GM12878 (cell line): ENCODE measurements at regions of chr2 and their contacts with region 1.

Region 1: DNA sequence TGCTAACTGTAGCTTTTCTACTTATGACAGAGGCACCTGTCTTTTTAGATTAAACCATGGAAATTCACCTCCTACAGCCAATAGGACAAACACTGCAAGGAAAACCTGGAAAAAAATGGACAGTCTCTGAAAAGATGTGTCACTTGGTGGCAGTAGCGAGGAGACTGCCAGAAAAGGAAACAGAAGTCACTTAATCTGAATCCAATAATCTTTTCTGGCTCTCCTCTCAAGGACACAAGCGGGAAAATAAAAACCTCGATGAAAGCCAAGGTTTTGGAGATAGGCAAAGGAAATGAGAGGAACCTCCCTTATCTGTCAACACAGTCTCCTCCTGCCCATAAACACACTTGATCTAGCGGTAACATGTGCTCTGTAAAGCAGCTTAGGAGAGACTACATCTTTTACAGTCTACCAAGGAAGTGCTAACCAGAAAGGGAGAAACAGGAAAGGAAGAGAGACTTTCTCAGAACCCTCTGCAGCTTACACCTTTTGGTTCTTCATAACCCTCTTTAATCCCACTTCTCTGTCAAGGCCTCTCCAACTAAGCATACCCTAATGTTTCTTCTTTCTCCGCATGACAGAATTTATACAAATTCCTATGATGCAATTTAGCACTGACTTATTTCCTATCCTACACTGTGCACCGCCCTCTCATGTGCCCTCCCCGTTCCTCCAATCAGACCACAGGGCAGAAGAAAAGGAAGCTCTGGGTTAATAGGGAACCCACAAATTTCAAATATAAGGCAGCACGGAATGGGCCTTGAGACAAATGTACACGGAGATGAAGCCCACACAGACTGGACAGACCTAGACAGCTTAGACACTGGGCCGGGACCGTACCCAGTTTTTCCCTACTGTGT is 52.8 kb downstream of the CLASP1 start:
- DNase-seq: peak; percentile 60
- ATAC-seq: peak; percentile 82
- H3K4me3 ChIP-seq: peak overlapping the region; percentile 62
- H3K27ac ChIP-seq: peak overlapping the region; percentile 84
- H3K4me1 ChIP-seq: peaks cover 38% of the 10 kb centered on the region
- H3K27me3 ChIP-seq: no peaks in the 10 kb centered on the region
- CTCF ChIP-seq: peak; percentile 28 to 46 (median 36); a peak in 4 of 6 replicates
- EP300 ChIP-seq: no peak; a peak in 1 of 4 replicates
- POLR2A ChIP-seq: peak; percentile 62
- RAD21 ChIP-seq: peak; percentile 46

Region 2: DNA sequence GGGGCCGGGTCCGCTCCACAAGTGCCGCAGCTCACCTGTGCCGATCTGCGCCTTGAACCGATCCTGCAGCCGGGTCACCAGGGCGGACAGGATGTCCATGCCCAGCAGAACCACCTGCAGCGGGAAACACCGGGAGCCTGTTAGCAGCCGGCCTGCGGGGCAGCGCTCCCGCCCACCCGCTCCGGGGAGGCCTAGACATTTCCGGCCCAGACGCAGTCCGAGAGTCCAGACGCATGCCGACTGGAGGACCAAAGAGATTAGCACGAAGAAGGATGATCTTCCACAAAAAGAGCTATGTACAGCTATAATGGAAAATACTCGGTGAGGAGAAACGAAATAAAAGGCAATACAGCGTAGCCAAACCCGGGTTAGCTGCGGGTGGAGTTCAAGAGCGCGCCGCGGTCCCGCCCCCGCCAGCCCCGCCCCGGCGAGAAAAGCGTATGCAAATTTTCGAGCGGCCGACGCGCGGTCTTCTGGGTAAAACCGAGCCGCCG is 66.2 kb before region 1 on chr2:
- CTCF ChIA-PET with region 1: interaction called, 44 read pairs
- POLR2A ChIA-PET with region 1: interaction called, 47 read pairs
- RAD21 ChIA-PET with region 1: interaction called, 39 read pairs
- SMC1A ChIA-PET with region 1: interaction called, 30 read pairs
- in situ Hi-C with region 1: no loop called
- intact Hi-C with region 1: loop called (anchors 2 kb)
- DNase-seq: peak; percentile 52
- ATAC-seq: peak; percentile 82
- H3K4me3 ChIP-seq: peak overlapping the region; percentile 79
- H3K27ac ChIP-seq: peak overlapping the region; percentile 98
- H3K4me1 ChIP-seq: peaks cover 18% of the 10 kb centered on the region
- H3K27me3 ChIP-seq: no peaks in the 10 kb centered on the region
- CTCF ChIP-seq: no peak
- EP300 ChIP-seq: no peak
- POLR2A ChIP-seq: no peak
- RAD21 ChIP-seq: no peak

Region 3: GRCh38 chr2:121575800-121576199 is 20.7 kb before region 1 on chr2:
- CTCF ChIA-PET with region 1: no interaction called
- POLR2A ChIA-PET with region 1: interaction called, 5 read pairs
- RAD21 ChIA-PET with region 1: no interaction called
- SMC1A ChIA-PET with region 1: interaction called, 12 read pairs
- in situ Hi-C with region 1: no loop called
- intact Hi-C with region 1: no loop called
- DNase-seq: no peak
- ATAC-seq: no peak
- H3K4me3 ChIP-seq: no peak overlapping the region
- H3K27ac ChIP-seq: no peak overlapping the region
- H3K4me1 ChIP-seq: no peaks in the 10 kb centered on the region
- H3K27me3 ChIP-seq: no peaks in the 10 kb centered on the region
- CTCF ChIP-seq: no peak
- EP300 ChIP-seq: no peak
- POLR2A ChIP-seq: no peak
- RAD21 ChIP-seq: no peak

Region 4: GRCh38 chr2:121640385-121641316 is 44.2 kb after region 1 on chr2:
- CTCF ChIA-PET with region 1: interaction called, 5 read pairs
- POLR2A ChIA-PET with region 1: interaction called, 8 read pairs
- RAD21 ChIA-PET with region 1: interaction called, 3 read pairs
- SMC1A ChIA-PET with region 1: interaction called, 14 read pairs
- in situ Hi-C with region 1: no loop called
- intact Hi-C with region 1: no loop called
- DNase-seq: no peak
- ATAC-seq: peak; percentile 50
- H3K4me3 ChIP-seq: no peak overlapping the region
- H3K27ac ChIP-seq: peak overlapping the region; percentile 31; the same call in 1 of the 2 replicates
- H3K4me1 ChIP-seq: no peaks in the 10 kb centered on the region
- H3K27me3 ChIP-seq: no peaks in the 10 kb centered on the region
- CTCF ChIP-seq: no peak
- EP300 ChIP-seq: no peak
- POLR2A ChIP-seq: no peak
- RAD21 ChIP-seq: no peak

Region 5: GRCh38 chr2:121699421-121700333 is 103.2 kb after region 1 on chr2:
- CTCF ChIA-PET with region 1: interaction called, 3 read pairs
- POLR2A ChIA-PET with region 1: interaction called, 3 read pairs
- RAD21 ChIA-PET with region 1: interaction called, 5 read pairs
- SMC1A ChIA-PET with region 1: interaction called, 7 read pairs
- in situ Hi-C with region 1: no loop called
- intact Hi-C with region 1: loop called (anchors 5 kb)
- DNase-seq: peak; percentile 60
- ATAC-seq: peak; percentile 99
- H3K4me3 ChIP-seq: no peak overlapping the region; the same call in 1 of the 2 replicates
- H3K27ac ChIP-seq: peak overlapping the region; percentile 22
- H3K4me1 ChIP-seq: peaks cover 15% of the 10 kb centered on the region
- H3K27me3 ChIP-seq: no peaks in the 10 kb centered on the region
- CTCF ChIP-seq: no peak
- EP300 ChIP-seq: no peak; a peak in 1 of 4 replicates
- POLR2A ChIP-seq: peak; percentile 47; the same call in 1 of the 2 replicates
- RAD21 ChIP-seq: no peak